ENCODE measurements at regions of chr6 and their contacts with region 1.

Region 1: DNA sequence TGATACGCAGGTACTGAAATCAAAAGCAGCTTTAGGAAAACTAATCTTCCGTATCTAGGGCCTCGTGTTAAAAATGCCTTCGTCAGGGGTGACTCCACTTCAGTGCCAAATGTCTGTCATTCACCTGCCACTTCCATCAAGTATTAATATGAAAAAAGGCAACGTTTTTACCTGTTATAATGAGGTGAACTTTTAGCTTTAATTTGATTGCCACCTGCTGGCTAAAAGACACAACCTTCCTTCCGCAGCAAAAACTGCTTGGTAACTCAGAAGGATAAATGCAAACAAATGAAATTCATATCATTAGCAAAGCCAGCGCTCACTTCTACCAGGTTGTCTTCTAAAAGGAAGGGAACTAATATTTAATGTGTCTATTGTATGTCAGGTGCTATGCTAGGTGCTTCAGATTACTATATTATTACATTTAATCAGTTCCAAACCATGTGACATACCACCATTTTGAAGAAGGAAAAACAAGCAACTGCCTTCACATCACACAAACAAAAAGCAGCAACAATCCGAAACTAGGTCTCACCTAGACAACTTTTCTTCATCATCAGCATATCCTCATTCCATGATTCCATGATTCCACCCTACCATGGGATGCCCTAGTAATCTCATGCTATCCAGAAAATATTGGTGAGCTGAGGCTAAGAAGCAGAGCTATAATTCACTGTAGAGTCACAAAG is 20.6 kb upstream of the ARHGAP18 start:
- DNase-seq: peak; percentile 38 to 61 (median 56)
- H3K4me3 ChIP-seq: no peak overlapping the region
- H3K4me3 Mint-ChIP-seq: no peak overlapping the region
- H3K27ac ChIP-seq: no peak overlapping the region
- H3K27ac Mint-ChIP-seq: peak overlapping the region in 4 of 7 donors; percentile 16 to 73 (median 54)
- H3K4me1 ChIP-seq: peaks cover 13% of the 10 kb centered on the region
- H3K4me1 Mint-ChIP-seq: peaks cover 6 to 11% (median 9%) of the 10 kb centered on the region in 4 donors
- H3K27me3 ChIP-seq: no peaks in the 10 kb centered on the region
- H3K27me3 Mint-ChIP-seq: no peaks in the 10 kb centered on the region

Region 2: DNA sequence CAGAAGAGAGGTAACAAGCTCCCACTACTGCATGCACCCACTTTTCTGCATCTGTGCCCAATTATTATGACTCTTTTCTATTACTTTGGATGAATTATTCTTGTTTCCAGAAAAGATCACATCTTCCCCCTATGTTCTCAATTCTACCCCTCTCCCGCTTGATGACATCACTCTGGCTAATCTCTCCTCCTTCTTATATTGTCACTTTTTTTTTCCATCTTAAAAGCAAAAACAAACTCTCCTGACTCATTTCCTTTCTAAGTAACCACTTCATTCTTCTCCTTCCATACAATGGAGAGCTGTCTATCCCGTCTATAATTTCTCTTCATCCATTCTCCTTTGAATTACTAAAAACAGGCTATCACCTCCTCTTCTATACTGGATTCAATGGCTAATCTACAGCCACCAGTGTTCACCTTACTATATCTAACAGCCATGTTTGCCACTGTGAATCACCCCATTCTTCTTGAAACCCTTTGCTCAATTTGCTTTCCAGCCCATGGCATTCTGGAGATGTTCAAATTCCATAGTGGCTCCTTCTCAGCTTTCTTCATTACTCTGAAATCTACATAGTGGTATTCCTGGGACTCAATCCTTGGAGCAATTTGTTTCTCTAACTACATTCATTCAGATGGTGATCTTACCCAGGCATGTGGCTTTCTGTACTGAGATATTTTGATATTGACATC is 399.0 kb before region 1 on chr6:
- CTCF ChIA-PET with region 1: no interaction called
- POLR2A ChIA-PET with region 1: no interaction called
- intact Hi-C with region 1: no loop called
- DNase-seq: no peak
- H3K4me3 ChIP-seq: no peak overlapping the region
- H3K4me3 Mint-ChIP-seq: no peak overlapping the region
- H3K27ac ChIP-seq: no peak overlapping the region
- H3K27ac Mint-ChIP-seq: no peak overlapping the region
- H3K4me1 ChIP-seq: no peaks in the 10 kb centered on the region
- H3K4me1 Mint-ChIP-seq: peaks cover 0 to 4% (median 0%) of the 10 kb centered on the region in 4 donors
- H3K27me3 ChIP-seq: no peaks in the 10 kb centered on the region
- H3K27me3 Mint-ChIP-seq: peaks cover 0 to 1% of the 10 kb centered on the region in 2 donors

Region 3: GRCh38 chr6:129543981-129544380 is 186.6 kb before region 1 on chr6:
- CTCF ChIA-PET with region 1: no interaction called
- POLR2A ChIA-PET with region 1: no interaction called
- intact Hi-C with region 1: no loop called
- DNase-seq: no peak
- H3K4me3 ChIP-seq: no peak overlapping the region
- H3K4me3 Mint-ChIP-seq: no peak overlapping the region
- H3K27ac ChIP-seq: no peak overlapping the region
- H3K27ac Mint-ChIP-seq: no peak overlapping the region
- H3K4me1 ChIP-seq: no peaks in the 10 kb centered on the region
- H3K4me1 Mint-ChIP-seq: peaks cover 0 to 2% (median 0%) of the 10 kb centered on the region in 4 donors
- H3K27me3 ChIP-seq: no peaks in the 10 kb centered on the region
- H3K27me3 Mint-ChIP-seq: no peaks in the 10 kb centered on the region

Region 4: DNA sequence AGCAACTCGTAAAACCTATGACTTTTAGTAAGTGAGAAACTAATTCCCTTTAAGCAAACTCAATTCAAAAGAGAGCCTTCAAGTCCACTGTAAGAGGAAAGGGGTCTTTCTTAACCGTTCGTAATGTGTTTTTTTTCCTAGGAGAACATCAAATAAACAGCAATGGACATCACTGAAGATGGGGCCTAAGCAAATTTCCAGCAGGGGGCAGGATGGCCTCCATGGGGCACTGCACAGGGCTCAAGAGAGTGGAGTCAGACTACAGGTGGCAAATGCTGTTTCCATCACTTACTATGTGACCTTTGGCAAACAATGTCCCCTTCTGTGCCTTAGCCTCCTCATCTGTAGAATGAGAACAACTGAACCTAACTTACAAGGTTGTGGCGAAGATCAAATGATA is 109.4 kb before region 1 on chr6:
- CTCF ChIA-PET with region 1: interaction called, 5 read pairs
- POLR2A ChIA-PET with region 1: no interaction called
- intact Hi-C with region 1: loop called (anchors 2 kb)
- DNase-seq: peak in 4 of 5 donors; percentile 15 to 31 (median 18)
- H3K4me3 ChIP-seq: no peak overlapping the region
- H3K4me3 Mint-ChIP-seq: no peak overlapping the region
- H3K27ac ChIP-seq: no peak overlapping the region
- H3K27ac Mint-ChIP-seq: no peak overlapping the region
- H3K4me1 ChIP-seq: no peaks in the 10 kb centered on the region
- H3K4me1 Mint-ChIP-seq: peaks cover 0 to 5% (median 2%) of the 10 kb centered on the region in 4 donors
- H3K27me3 ChIP-seq: no peaks in the 10 kb centered on the region
- H3K27me3 Mint-ChIP-seq: no peaks in the 10 kb centered on the region

Region 5: DNA sequence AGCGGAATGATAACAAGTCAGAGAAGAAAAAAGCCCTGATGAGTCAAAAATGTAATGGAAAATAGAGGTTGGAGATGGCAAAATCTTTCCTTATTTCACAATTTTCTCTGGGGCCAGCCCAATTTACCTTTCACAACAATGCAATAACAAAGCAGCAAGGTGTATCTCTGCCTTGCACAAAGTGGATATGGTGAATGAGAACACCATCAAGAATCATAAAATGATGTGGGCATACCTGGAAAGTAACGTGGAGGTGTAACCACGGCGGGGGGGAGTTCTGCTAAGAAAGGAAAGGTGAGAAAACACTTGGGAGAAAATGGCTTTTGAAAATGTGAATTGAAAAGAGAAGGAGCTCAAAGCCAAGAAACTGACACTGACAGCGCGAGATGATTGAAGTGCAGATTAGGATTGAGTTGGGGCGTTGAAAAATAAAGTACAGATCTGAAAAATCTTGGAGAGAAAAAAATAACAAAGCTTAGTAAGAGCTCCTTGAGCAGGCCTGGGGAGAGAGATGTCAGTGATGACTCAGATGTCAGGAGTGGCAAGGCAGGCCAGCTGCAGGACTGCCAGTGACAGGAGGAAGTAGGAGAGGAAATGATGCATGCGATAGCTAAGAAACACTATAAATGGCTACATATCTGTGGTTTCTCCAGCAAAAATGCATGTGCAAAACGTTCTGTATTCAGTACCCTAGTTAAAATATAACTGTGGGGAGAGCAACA is 46.9 kb before region 1 on chr6:
- CTCF ChIA-PET with region 1: interaction called, 17 read pairs
- POLR2A ChIA-PET with region 1: interaction called, 3 read pairs
- intact Hi-C with region 1: no loop called
- DNase-seq: peak; percentile 55 to 86 (median 64)
- H3K4me3 ChIP-seq: no peak overlapping the region
- H3K4me3 Mint-ChIP-seq: peak overlapping the region in 7 of 8 donors; percentile 30 to 75 (median 52)
- H3K27ac ChIP-seq: peak overlapping the region; percentile 43
- H3K27ac Mint-ChIP-seq: peak overlapping the region; percentile 70 to 91 (median 90)
- H3K4me1 ChIP-seq: peaks cover 65% of the 10 kb centered on the region
- H3K4me1 Mint-ChIP-seq: peaks cover 37 to 51% (median 44%) of the 10 kb centered on the region in 4 donors
- H3K27me3 ChIP-seq: no peaks in the 10 kb centered on the region
- H3K27me3 Mint-ChIP-seq: no peaks in the 10 kb centered on the region

Region 6: GRCh38 chr6:129719692-129720091 is 10.9 kb before region 1 on chr6:
- CTCF ChIA-PET with region 1: interaction called, 28 read pairs
- POLR2A ChIA-PET with region 1: no interaction called
- intact Hi-C with region 1: no loop called
- DNase-seq: no peak
- H3K4me3 ChIP-seq: no peak overlapping the region
- H3K4me3 Mint-ChIP-seq: no peak overlapping the region
- H3K27ac ChIP-seq: no peak overlapping the region
- H3K27ac Mint-ChIP-seq: no peak overlapping the region
- H3K4me1 ChIP-seq: no peaks in the 10 kb centered on the region
- H3K4me1 Mint-ChIP-seq: no peaks in the 10 kb centered on the region
- H3K27me3 ChIP-seq: no peaks in the 10 kb centered on the region
- H3K27me3 Mint-ChIP-seq: no peaks in the 10 kb centered on the region

Region 7: DNA sequence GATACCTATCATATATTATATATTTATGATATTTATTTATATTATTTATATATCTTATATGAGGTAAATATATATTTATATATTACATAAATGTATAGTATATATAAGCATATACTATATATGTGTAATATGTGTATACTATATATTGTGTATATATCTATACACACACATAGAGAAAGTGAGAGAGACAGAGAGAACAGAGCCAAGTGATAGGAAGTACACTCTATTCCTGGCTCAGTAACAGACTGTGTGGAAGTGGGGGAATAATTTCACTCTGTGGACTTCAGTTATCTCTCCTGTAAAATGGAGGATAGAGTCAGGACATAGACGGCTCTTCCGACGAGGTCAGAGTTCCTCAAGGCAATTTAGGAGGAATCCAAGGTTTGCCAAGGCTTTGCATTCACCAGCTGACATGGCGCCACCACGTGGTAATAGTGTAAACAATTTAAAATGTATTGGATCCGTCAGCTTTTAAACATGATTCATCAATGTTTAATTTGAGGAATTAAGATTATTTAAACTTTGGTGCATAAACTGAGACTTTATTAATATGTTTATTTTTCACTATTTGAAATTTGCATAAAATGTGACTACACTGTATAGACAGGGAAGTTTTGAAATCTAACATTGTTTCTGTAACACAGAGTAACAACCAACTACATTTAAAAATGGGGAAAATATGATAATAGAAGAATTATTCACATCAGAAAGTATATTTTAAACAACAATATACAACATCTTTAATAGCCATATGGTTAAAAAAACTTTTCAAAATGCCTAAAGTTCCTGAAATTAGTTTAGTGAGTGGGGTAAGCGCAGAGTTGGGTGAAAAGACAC is 205.9 kb after region 1 on chr6:
- CTCF ChIA-PET with region 1: interaction called, 3 read pairs
- POLR2A ChIA-PET with region 1: no interaction called
- intact Hi-C with region 1: loop called (anchors 5 kb)
- DNase-seq: peak in 4 of 5 donors; percentile 25 to 39 (median 34)
- H3K4me3 ChIP-seq: no peak overlapping the region
- H3K4me3 Mint-ChIP-seq: peak overlapping the region in 2 of 8 donors; percentile 38 to 79
- H3K27ac ChIP-seq: no peak overlapping the region
- H3K27ac Mint-ChIP-seq: no peak overlapping the region
- H3K4me1 ChIP-seq: no peaks in the 10 kb centered on the region
- H3K4me1 Mint-ChIP-seq: peaks cover 0 to 4% (median 1%) of the 10 kb centered on the region in 4 donors
- H3K27me3 ChIP-seq: peaks cover 4% of the 10 kb centered on the region
- H3K27me3 Mint-ChIP-seq: peaks cover 11 to 15% of the 10 kb centered on the region in 2 donors

Region 8: DNA sequence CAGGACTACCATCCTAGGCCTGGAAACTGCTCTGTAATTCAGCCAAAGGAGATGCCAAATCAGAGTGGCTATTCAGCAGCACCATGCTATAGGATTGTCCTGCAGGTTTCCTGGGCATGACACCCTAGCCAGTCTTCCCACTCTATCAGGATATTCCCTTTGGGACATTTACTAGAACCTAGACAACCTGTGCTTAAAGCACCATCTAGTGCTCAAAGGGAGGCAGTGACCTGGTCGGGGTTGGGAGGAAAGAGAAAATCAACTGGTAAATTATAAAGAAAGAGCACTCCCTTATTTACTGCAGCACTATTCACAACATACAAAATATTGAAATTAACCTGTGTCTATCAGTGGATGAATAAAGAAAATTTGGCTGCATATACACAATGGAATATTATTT is 1029.4 kb after region 1 on chr6:
- CTCF ChIA-PET with region 1: no interaction called
- POLR2A ChIA-PET with region 1: no interaction called
- intact Hi-C with region 1: no loop called
- DNase-seq: no peak
- H3K4me3 ChIP-seq: no peak overlapping the region
- H3K4me3 Mint-ChIP-seq: no peak overlapping the region
- H3K27ac ChIP-seq: no peak overlapping the region
- H3K27ac Mint-ChIP-seq: no peak overlapping the region
- H3K4me1 ChIP-seq: peaks cover 10% of the 10 kb centered on the region
- H3K4me1 Mint-ChIP-seq: peaks cover 4 to 21% (median 11%) of the 10 kb centered on the region in 4 donors
- H3K27me3 ChIP-seq: no peaks in the 10 kb centered on the region
- H3K27me3 Mint-ChIP-seq: peaks cover 0 to 2% of the 10 kb centered on the region in 2 donors

Measured in CD4-positive, alpha-beta memory T cell (primary cell).